ENCODE measurements at regions of chrX and their contacts with region 1.

Region 1: DNA sequence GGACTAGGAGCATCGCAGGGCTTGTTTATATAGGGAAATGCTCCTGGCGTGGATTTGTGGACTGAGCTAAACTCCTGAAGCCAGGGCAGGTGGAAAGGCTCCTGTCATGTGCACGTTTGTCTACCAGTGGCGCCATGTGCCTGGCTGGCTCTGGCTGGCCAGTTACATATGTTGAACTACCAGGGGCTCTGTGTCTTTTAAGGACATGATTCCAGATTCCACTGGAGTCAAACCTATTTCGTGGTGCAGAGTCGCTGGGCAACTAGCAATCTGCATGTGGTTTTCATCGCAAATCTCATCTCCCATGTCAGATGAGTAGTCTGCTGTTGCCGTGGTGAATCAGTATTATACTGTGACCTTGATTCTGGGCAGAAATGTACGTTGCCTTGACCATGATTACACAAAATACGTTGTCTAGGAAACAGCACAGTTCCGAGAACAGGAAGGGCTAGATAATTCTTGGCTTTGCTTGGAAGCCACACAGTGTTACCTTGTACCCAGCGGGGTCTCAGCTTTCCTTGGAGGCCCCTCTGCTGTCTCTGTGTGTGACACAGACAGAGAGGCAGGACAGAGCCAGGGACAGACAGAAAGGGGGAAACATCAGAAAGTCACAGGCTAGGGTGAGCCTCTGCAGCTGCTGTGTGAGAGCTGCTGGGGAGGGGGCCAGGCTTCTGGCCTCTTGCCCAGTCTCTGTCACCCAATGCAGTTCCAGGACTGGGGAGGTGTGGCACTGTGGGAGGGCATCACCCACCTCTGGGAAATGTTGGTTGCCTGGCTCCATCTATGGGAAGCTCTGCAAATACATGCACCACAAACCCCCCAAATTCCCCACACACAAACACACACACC is 19.2 kb downstream of the PNMA6E start:
- DNase-seq: peak in 1 of 2 donors; percentile 15
- ATAC-seq: peak in 4 of 8 donors; percentile 30 to 42 (median 38)
- H3K4me3 ChIP-seq: no peak overlapping the region
- H3K27ac ChIP-seq: peak overlapping the region in 1 of 10 donors; percentile 50
- H3K4me1 ChIP-seq: peaks cover 0 to 4% (median 0%) of the 10 kb centered on the region in 9 donors
- H3K27me3 ChIP-seq: no peaks in the 10 kb centered on the region
- CTCF ChIP-seq: peak in 1 of 9 donors; percentile 9

Region 2: DNA sequence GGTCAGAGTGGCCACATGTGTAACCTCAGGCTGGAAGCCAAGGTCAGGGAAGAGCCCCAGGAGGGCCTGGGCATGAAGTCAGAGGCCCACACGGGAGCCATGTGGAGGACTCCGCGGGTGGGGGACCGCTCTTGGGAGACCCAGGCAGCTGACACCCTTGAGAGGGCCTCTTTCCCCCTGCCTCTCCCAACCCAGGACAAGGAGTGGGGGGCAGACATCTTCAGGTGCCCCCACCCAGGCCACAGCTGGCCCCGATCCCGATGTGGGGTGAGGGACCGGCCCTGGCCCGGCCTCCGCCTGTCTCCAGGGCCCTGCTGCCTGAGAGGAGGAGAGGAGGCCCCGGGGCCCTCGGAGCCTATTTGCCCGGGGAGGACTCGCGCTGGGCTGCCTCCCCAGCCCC is 306.5 kb before region 1 on chrX:
- intact Hi-C with region 1: loop called in 1 of 10 experiments (anchors 10 kb)
- DNase-seq: no peak
- ATAC-seq: no peak
- H3K4me3 ChIP-seq: no peak overlapping the region
- H3K27ac ChIP-seq: no peak overlapping the region
- H3K4me1 ChIP-seq: no peaks in the 10 kb centered on the region
- H3K27me3 ChIP-seq: no peaks in the 10 kb centered on the region
- CTCF ChIP-seq: no peak

Region 3: GRCh38 chrX:153336121-153336894 is 45.6 kb before region 1 on chrX:
- intact Hi-C with region 1: no loop called
- DNase-seq: no peak
- ATAC-seq: no peak
- H3K4me3 ChIP-seq: no peak overlapping the region
- H3K27ac ChIP-seq: no peak overlapping the region
- H3K4me1 ChIP-seq: peaks cover 0 to 6% (median 0%) of the 10 kb centered on the region in 9 donors
- H3K27me3 ChIP-seq: peaks cover 0 to 6% (median 0%) of the 10 kb centered on the region in 7 donors
- CTCF ChIP-seq: no peak